MCF 10A (cell line): ENCODE measurements at regions of chr22 and their contacts with region 1.

Region 1: DNA sequence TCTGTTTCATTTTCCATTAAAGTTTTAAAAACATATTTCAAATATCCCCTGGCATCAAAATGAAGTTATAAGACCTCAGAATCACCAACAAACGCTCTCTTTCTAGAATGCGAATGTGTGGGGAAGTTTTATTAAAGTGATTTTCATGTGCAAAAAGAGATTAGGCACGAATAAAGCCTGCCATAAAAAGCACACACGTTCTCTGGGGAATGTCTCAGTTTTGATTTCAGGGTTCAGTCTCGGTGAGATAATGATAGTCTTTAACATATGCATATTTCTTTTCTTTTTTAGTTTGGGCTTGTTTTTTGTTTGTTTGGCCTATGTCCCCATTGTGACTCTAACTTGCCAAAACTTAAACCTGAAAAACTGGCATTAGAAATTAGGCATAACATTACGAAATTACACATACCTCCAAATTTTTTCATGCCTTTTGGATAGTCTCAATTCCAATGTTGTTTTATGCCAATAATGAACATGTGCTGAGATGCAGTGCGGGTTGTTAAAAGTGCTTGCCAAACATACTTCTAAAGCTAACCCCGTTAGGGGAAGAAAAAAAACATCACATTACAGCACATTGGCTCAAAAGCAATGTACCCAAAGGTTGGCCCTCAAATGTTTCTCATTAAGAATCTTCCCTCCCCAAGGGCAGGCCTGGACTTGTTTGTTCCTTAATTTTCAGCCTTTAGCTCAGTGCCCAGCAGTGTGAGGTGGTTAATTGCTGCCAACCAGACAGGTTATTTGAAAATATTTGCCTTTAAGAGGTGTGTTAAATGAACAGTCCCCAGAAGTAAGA is 33.2 kb upstream of the FBLN1 start:
- DNase-seq: peak; percentile 91
- H3K4me3 Mint-ChIP-seq: peak overlapping the region; percentile 58
- H3K27ac Mint-ChIP-seq: peak overlapping the region; percentile 90
- H3K4me1 Mint-ChIP-seq: peaks cover 25% of the 10 kb centered on the region
- H3K27me3 Mint-ChIP-seq: no peaks in the 10 kb centered on the region
- CTCF ChIP-seq: no peak

Region 2: DNA sequence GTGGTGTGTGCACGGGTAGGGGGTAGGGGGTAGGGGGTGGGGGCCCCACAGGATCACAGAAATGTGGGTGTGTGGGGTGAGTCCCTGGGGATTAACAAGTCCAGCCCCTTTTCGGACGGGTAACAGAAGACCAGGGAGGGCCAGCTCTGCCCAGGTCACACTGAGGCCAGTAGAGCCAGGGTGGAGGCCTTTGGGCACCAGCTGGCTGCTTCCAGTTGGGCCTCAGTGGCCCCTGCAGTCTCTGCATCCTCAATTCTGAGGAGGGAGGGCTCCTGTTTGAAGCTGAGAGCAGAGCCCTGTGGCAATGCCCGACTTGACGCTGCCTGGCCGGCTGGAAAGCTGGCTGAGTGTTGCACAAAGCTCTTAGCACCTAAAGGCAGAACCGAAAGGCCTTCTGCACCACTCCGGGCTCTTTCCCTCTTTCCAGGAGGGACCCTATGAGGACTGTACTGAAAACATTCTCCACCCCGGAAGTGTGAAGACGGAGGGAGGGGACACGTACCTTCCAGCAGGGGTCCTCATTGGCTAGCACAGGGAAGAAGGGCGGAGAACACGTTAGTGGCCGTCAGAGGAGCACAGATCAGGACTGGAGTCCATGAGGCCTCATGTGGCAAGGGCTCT is 580.1 kb before region 1 on chr22:
- CTCF ChIA-PET with region 1: no interaction called
- POLR2A ChIA-PET with region 1: no interaction called
- intact Hi-C with region 1: no loop called
- DNase-seq: no peak
- H3K4me3 Mint-ChIP-seq: no peak overlapping the region
- H3K27ac Mint-ChIP-seq: no peak overlapping the region
- H3K4me1 Mint-ChIP-seq: no peaks in the 10 kb centered on the region
- H3K27me3 Mint-ChIP-seq: no peaks in the 10 kb centered on the region
- CTCF ChIP-seq: no peak

Region 3: DNA sequence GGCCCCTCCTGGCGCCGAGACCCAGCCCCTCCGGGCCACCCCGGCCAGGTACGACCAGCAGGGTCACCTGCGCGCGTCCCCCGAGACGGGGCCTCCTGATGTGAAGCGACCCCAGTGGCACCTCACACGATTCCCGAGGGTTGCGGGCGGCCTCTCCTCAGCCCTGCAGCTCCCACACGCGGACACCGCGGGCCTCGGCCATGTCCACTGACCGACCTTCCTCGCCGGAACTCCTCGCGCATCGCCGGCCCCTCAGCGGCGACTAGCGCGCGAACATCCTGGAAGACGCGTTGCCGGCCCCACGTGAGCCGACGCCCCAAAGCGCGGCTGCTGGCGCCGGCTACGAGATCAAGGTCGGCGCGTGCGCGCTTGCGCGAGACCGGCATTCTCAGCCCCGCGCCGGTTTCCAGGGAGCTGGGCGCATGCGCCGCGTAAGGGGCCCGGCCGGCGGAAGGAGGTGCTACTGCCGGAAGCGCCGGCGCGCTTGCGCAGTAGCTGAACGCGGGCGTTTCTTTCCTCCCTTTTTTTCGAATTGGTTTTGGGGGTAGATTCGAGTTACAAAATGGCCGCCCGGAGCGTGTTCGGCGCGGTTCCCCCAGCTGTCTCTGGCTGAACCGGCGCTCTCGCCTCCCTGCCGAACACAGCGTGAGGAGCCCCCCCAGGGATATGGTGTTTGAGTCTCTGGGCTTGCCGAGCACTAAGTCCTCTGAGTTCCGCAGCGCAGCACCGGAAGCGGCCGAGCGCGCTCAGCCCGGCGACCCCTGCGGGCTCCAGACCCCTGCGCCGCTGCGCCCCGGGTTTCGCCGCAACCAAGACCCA is 305.8 kb before region 1 on chr22 and contains the start of gene NUP50:
- CTCF ChIA-PET with region 1: no interaction called
- POLR2A ChIA-PET with region 1: interaction called, 10 read pairs
- intact Hi-C with region 1: no loop called
- DNase-seq: peak; percentile 96
- H3K4me3 Mint-ChIP-seq: peak within 1 kb of the TSS; percentile 91
- H3K27ac Mint-ChIP-seq: peak within 1 kb of the TSS; percentile 97
- H3K4me1 Mint-ChIP-seq: peaks cover 43% of the 10 kb centered on the region
- H3K27me3 Mint-ChIP-seq: no peaks in the 10 kb centered on the region
- CTCF ChIP-seq: no peak
- total RNA-seq, gene NUP50: 70.3 and 72.5 TPM in 2 replicates

Region 4: GRCh38 chr22:45441138-45441537 is 28.3 kb before region 1 on chr22:
- CTCF ChIA-PET with region 1: interaction called, 5 read pairs
- POLR2A ChIA-PET with region 1: interaction called, 31 read pairs
- intact Hi-C with region 1: no loop called
- DNase-seq: peak; percentile 68
- H3K4me3 Mint-ChIP-seq: no peak overlapping the region
- H3K27ac Mint-ChIP-seq: no peak overlapping the region
- H3K4me1 Mint-ChIP-seq: peaks cover 19% of the 10 kb centered on the region
- H3K27me3 Mint-ChIP-seq: no peaks in the 10 kb centered on the region
- CTCF ChIP-seq: peak; percentile 81

Region 5: GRCh38 chr22:45448431-45448830 is 21.0 kb before region 1 on chr22:
- CTCF ChIA-PET with region 1: interaction called, 3 read pairs
- POLR2A ChIA-PET with region 1: interaction called, 31 read pairs
- intact Hi-C with region 1: no loop called
- DNase-seq: no peak
- H3K4me3 Mint-ChIP-seq: no peak overlapping the region
- H3K27ac Mint-ChIP-seq: no peak overlapping the region
- H3K4me1 Mint-ChIP-seq: peaks cover 15% of the 10 kb centered on the region
- H3K27me3 Mint-ChIP-seq: no peaks in the 10 kb centered on the region
- CTCF ChIP-seq: no peak

Region 6: GRCh38 chr22:45483274-45483673 is 13.8 kb after region 1 on chr22:
- CTCF ChIA-PET with region 1: interaction called, 4 read pairs
- POLR2A ChIA-PET with region 1: interaction called, 12 read pairs
- intact Hi-C with region 1: no loop called
- DNase-seq: no peak
- H3K4me3 Mint-ChIP-seq: no peak overlapping the region
- H3K27ac Mint-ChIP-seq: no peak overlapping the region
- H3K4me1 Mint-ChIP-seq: peaks cover 13% of the 10 kb centered on the region
- H3K27me3 Mint-ChIP-seq: no peaks in the 10 kb centered on the region
- CTCF ChIP-seq: no peak

Region 7: DNA sequence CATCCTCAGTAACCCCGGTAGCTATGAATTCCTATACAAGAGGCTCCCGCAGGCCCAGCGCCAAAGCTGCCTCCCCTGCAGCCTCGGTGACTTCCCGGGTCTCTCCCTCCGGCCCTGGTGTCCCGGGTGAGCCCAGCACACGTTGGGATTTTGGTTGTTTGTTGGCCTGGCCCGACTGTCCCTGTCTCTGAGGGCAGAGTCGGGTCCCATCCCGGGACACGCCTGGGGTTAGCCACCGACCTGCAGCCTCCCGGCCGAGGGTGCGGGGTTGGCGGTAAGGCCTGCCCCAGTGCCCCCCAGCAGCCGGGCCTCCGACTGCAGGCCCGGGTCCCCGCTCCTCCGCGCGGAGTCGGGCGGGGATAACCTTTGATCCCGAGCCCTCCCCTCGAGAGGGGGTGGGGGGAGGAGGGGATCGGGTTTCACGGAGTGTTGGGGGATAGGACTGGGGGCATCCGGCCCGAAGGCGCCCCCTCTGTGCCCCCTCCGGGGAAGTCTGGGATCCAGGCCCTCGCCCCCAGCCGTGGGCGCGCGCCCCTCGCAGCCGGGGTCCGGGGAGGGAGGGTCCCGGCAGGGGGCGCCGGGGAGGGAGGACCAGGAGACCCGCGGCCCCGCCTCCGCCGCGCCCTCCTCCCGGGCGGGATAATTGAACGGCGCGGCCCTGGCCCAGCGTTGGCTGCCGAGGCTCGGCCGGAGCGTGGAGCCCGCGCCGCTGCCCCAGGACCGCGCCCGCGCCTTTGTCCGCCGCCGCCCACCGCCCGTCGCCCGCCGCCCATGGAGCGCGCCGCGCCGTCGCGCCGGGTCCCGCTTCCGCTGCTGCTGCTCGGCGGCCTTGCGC is 33.0 kb after region 1 on chr22 and contains the start of gene FBLN1:
- CTCF ChIA-PET with region 1: interaction called, 3 read pairs
- POLR2A ChIA-PET with region 1: interaction called, 59 read pairs
- intact Hi-C with region 1: no loop called
- DNase-seq: peak; percentile 52
- H3K4me3 Mint-ChIP-seq: peak within 1 kb of the TSS; percentile 85
- H3K27ac Mint-ChIP-seq: peak within 1 kb of the TSS; percentile 86
- H3K4me1 Mint-ChIP-seq: peaks cover 13% of the 10 kb centered on the region
- H3K27me3 Mint-ChIP-seq: no peaks in the 10 kb centered on the region
- CTCF ChIP-seq: peak; percentile 36
- total RNA-seq, gene FBLN1: 69.0 and 110 TPM in 2 replicates

Region 8: DNA sequence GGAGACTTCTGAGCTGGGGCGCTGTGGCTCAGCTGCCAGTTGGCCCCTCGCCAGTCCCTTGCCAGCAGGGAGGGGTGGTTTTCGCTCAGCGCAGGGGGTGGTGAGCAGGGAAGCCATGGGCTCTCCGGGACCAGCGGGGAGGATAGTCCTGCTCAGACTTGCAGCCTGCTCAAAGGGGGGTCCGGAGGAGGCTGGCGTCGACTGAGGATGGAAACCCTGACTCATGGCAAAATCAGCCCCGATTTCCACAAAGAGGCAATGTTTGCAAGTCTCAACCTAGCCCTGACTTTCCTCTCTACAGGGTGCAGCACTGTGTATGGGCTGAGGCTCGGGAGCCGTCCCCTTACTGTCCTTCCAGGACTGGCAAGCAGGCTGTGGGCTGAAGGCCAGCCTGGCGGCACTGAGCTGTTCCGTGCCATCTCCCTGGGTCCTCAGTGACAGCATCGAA is 68.3 kb after region 1 on chr22:
- CTCF ChIA-PET with region 1: interaction called, 6 read pairs
- POLR2A ChIA-PET with region 1: interaction called, 161 read pairs
- intact Hi-C with region 1: no loop called
- DNase-seq: peak; percentile 97
- H3K4me3 Mint-ChIP-seq: peak overlapping the region; percentile 20
- H3K27ac Mint-ChIP-seq: peak overlapping the region; percentile 87
- H3K4me1 Mint-ChIP-seq: peaks cover 13% of the 10 kb centered on the region
- H3K27me3 Mint-ChIP-seq: no peaks in the 10 kb centered on the region
- CTCF ChIP-seq: no peak